ENCODE measurements at regions of chr1 and their contacts with region 1.

Region 1: DNA sequence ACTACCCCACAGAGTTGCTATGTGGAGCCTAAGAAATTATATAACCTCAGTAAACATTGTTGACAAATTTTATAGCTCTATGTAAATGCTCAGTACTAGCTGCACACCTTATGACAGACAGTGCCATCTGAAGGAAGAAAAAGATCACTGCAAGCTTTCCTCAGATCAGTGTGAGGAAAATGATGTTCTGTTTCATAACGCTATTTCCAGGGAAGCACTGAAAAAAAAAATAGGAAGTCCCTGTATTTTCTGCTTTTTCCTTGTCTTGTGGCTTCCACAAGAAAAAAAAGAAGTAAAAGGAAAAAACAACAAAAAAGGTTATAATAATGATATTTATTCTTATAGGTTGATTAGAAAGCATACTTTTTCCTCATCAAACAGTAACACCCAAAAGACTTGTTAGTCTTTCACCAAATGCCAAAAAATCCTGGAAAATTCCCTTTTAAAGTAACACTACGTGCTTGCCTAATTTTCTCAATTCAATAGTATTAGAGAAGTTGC is 23.2 kb downstream of the LYST start:
- DNase-seq: peak; percentile 68
- ATAC-seq: peak; percentile 96
- H3K4me3 ChIP-seq: no peak overlapping the region
- H3K27ac ChIP-seq: no peak overlapping the region
- H3K4me1 ChIP-seq: no peaks in the 10 kb centered on the region; the same call in 1 of the 2 replicates
- H3K27me3 ChIP-seq: no peaks in the 10 kb centered on the region
- CTCF ChIP-seq: peak; percentile 64
- POLR2A ChIP-seq: no peak
- RAD21 ChIP-seq: peak; percentile 72

Region 2: GRCh38 chr1:235050911-235051360 is 792.6 kb before region 1 on chr1:
- CTCF ChIA-PET with region 1: no interaction called
- POLR2A ChIA-PET with region 1: no interaction called
- dilution Hi-C with region 1: no loop called
- in situ Hi-C with region 1: no loop called
- intact Hi-C with region 1: no loop called
- DNase-seq: peak; percentile 84
- ATAC-seq: peak; percentile 9; the same call in 1 of the 2 replicates
- H3K4me3 ChIP-seq: no peak overlapping the region
- H3K27ac ChIP-seq: no peak overlapping the region
- H3K4me1 ChIP-seq: peaks cover 21% of the 10 kb centered on the region
- H3K27me3 ChIP-seq: no peaks in the 10 kb centered on the region
- CTCF ChIP-seq: no peak
- POLR2A ChIP-seq: no peak
- RAD21 ChIP-seq: no peak

Region 3: GRCh38 chr1:235791532-235792060 is 51.9 kb before region 1 on chr1:
- CTCF ChIA-PET with region 1: no interaction called
- POLR2A ChIA-PET with region 1: no interaction called
- dilution Hi-C with region 1: no loop called
- in situ Hi-C with region 1: no loop called
- intact Hi-C with region 1: loop called (anchors 5 kb)
- DNase-seq: no peak
- ATAC-seq: no peak
- H3K4me3 ChIP-seq: no peak overlapping the region
- H3K27ac ChIP-seq: no peak overlapping the region
- H3K4me1 ChIP-seq: no peaks in the 10 kb centered on the region
- H3K27me3 ChIP-seq: no peaks in the 10 kb centered on the region
- CTCF ChIP-seq: no peak
- POLR2A ChIP-seq: no peak
- RAD21 ChIP-seq: no peak

Measured in IMR-90 (cell line).